ENCODE measurements at regions of chr5 and their contacts with region 1.

Region 1: GRCh38 chr5:32232441-32233219 is 58.5 kb upstream of the GOLPH3 start:
- DNase-seq: peak; percentile 76 to 87 (median 81)
- ATAC-seq: peak; percentile 73 to 87 (median 80)
- H3K4me3 ChIP-seq: no peak overlapping the region
- H3K27ac ChIP-seq: peak overlapping the region; percentile 29 to 90 (median 80)
- H3K4me1 ChIP-seq: peaks cover 24 to 40% (median 36%) of the 10 kb centered on the region in 3 donors
- H3K27me3 ChIP-seq: no peaks in the 10 kb centered on the region
- CTCF ChIP-seq: peak; percentile 77 to 90 (median 80)

Region 2: DNA sequence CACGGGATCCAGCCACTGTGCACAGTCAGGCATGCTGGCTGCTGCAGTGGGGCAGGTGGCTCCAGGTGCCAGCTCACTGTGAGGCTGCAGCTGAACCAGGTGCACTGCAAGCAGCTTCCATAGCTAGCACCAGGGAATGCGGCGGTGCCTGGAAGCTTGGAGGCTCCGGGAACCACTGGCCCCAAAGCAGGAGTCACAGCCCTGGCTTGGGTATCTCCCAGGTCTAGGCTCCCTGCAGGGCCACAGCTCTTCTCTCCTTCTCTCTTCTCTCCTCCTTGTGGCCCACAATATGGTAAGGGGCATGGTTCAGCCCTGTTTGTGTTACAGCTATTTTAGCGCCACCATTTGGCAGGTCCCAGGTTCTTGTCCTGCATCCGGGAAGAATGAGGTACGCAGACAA is 86.8 kb after region 1 on chr5:
- intact Hi-C with region 1: loop called in 1 of 3 experiments (anchors 5 kb)
- DNase-seq: no peak
- ATAC-seq: no peak
- H3K4me3 ChIP-seq: no peak overlapping the region
- H3K27ac ChIP-seq: no peak overlapping the region
- H3K4me1 ChIP-seq: peaks cover 0 to 4% (median 3%) of the 10 kb centered on the region in 3 donors
- H3K27me3 ChIP-seq: no peaks in the 10 kb centered on the region
- CTCF ChIP-seq: no peak

Region 3: DNA sequence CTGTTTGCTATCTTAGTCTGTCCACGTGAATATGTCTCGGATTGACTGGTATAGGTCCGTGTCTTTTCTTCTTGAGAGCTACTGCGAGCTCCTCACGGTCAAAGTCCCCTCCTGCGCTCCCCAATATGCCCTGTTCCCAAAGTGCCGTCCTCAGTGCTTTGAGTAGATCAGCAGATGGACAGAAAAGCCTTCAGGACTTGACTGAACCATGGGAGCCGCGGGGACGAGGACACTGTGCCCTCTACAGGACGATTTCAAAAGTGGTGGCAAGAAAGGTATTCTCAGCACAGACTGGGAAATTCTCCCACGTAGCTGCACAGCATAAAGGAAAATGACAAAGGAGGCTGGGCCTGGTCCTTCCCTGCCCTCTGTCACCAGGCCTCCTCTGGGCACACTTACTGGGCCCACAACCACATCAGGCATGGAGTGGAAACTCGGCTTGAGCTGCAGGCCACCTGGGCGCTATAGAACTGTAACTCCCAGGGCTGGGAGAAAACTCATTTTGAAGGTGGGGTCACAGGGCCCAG is 96.7 kb after region 1 on chr5:
- intact Hi-C with region 1: loop called in 2 of 3 experiments (anchors 5 kb)
- DNase-seq: peak; percentile 57 to 81 (median 68)
- ATAC-seq: peak; percentile 80 to 93 (median 89)
- H3K4me3 ChIP-seq: no peak overlapping the region
- H3K27ac ChIP-seq: peak overlapping the region in 3 of 4 donors; percentile 22 to 69 (median 66)
- H3K4me1 ChIP-seq: peaks cover 4 to 18% (median 10%) of the 10 kb centered on the region in 3 donors
- H3K27me3 ChIP-seq: no peaks in the 10 kb centered on the region
- CTCF ChIP-seq: peak; percentile 21 to 59 (median 52)

Region 4: DNA sequence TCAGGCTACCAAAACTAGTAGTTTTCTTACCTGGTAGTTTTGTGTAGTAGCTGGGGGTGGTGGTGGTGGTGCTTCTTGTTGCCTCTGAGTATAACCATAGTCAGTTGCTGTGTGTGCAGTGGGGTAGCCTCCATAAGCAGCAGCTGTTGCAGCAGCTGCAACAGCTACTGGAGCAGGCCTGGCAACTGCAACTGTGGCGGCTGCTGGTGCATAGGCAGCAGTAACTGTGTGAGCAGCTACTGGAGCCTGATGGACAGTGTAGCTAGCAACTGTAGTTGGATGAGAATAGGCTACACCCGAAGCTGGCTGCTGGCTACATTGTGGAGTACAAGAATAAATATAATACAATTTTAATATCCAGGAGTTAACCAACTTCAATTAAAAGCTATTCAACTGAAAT is 187.2 kb after region 1 on chr5:
- intact Hi-C with region 1: no loop called
- DNase-seq: no peak
- ATAC-seq: peak in 1 of 4 donors; percentile 51
- H3K4me3 ChIP-seq: no peak overlapping the region
- H3K27ac ChIP-seq: no peak overlapping the region
- H3K4me1 ChIP-seq: peaks cover 0 to 10% (median 10%) of the 10 kb centered on the region in 3 donors
- H3K27me3 ChIP-seq: no peaks in the 10 kb centered on the region
- CTCF ChIP-seq: no peak

Region 5: GRCh38 chr5:32589942-32590869 is 357.6 kb after region 1 on chr5:
- intact Hi-C with region 1: loop called in 1 of 3 experiments (anchors 10 kb)
- DNase-seq: no peak
- ATAC-seq: no peak
- H3K4me3 ChIP-seq: no peak overlapping the region
- H3K27ac ChIP-seq: no peak overlapping the region
- H3K4me1 ChIP-seq: peaks cover 0 to 7% (median 0%) of the 10 kb centered on the region in 3 donors
- H3K27me3 ChIP-seq: no peaks in the 10 kb centered on the region
- CTCF ChIP-seq: peak; percentile 4 to 55 (median 50)

Measured in pancreas (tissue), 10 donors.